SK-N-SH (cell line): ENCODE measurements at regions of chr5 and their contacts with region 1.

Region 1: GRCh38 chr5:41843456-41844370 is 26.5 kb downstream of the OXCT1 start:
- DNase-seq: peak; percentile 35
- H3K4me3 ChIP-seq: no peak overlapping the region; a peak in 1 of 4 replicates
- H3K27ac ChIP-seq: no peak overlapping the region
- H3K4me1 ChIP-seq: no peaks in the 10 kb centered on the region; a peak in 1 of 4 replicates
- H3K27me3 ChIP-seq: no peaks in the 10 kb centered on the region
- CTCF ChIP-seq: peak; percentile 93
- EP300 ChIP-seq: no peak
- RAD21 ChIP-seq: peak; percentile 100

Region 2: GRCh38 chr5:41270423-41271251 is 573.1 kb before region 1 on chr5:
- CTCF ChIA-PET with region 1: interaction called, 15 read pairs
- POLR2A ChIA-PET with region 1: no interaction called
- DNase-seq: peak; percentile 18
- H3K4me3 ChIP-seq: no peak overlapping the region; a peak in 1 of 4 replicates
- H3K27ac ChIP-seq: peak overlapping the region in 1 of 2 experiments; percentile 43; a peak in 2 of 4 replicates
- H3K4me1 ChIP-seq: peaks cover 0 to 5% of the 10 kb centered on the region in 2 experiments; a peak in 3 of 4 replicates
- H3K27me3 ChIP-seq: no peaks in the 10 kb centered on the region
- CTCF ChIP-seq: peak; percentile 91
- EP300 ChIP-seq: no peak
- RAD21 ChIP-seq: peak; percentile 94

Region 3: DNA sequence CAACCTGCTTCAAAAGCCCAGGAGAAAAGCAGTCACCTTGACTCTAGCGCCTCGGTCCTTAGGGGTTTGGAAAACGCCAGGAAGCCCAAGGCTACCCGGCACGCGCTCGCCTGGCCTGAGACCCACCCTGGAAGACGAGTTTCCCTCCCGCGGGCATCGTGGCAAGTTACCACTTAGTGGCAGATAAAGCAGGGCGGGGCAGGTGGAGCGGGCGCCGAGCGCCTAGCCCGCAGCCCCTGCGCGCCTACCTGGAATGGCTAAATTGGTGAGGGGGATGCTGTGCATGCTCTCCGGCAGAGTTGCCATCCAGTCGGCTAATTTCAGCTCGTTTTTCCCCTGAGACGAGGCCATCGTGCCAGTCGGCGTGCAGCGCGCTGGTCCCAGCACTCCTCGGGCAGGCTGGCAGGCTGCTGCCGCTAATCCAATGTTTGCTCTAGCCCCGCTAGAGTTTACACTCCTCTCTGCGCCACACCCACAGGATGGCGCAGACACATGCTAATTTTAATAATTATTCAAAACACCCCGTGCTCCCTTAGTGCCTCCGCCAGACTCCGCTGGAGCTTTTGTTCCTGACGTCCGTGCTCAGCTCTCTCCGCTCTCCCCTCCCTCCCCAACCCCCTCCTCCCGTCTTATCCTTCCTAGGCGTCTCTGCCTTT is 333.4 kb before region 1 on chr5 and contains the start of gene PLCXD3:
- CTCF ChIA-PET with region 1: interaction called, 24 read pairs
- POLR2A ChIA-PET with region 1: interaction called, 3 read pairs
- DNase-seq: peak; percentile 69
- H3K4me3 ChIP-seq: peak within 1 kb of the TSS; percentile 67 to 71
- H3K27ac ChIP-seq: peak within 1 kb of the TSS in 1 of 2 experiments; percentile 93; a peak in 2 of 4 replicates
- H3K4me1 ChIP-seq: peaks cover 10 to 15% of the 10 kb centered on the region in 2 experiments; a peak in 3 of 4 replicates
- H3K27me3 ChIP-seq: 0 out of 2 replicates have a peak, but pooled peaks cover 9% of the 10 kb centered on the region
- CTCF ChIP-seq: no peak
- EP300 ChIP-seq: no peak
- RAD21 ChIP-seq: no peak
- polyA plus RNA-seq, gene PLCXD3: 0.15 and 0.34 TPM in 2 replicates

Region 4: GRCh38 chr5:41547991-41548390 is 295.7 kb before region 1 on chr5:
- CTCF ChIA-PET with region 1: no interaction called
- POLR2A ChIA-PET with region 1: no interaction called
- DNase-seq: no peak
- H3K4me3 ChIP-seq: no peak overlapping the region
- H3K27ac ChIP-seq: no peak overlapping the region
- H3K4me1 ChIP-seq: no peaks in the 10 kb centered on the region
- H3K27me3 ChIP-seq: no peaks in the 10 kb centered on the region
- CTCF ChIP-seq: no peak
- EP300 ChIP-seq: no peak
- RAD21 ChIP-seq: no peak

Region 5: GRCh38 chr5:41641621-41642020 is 202.1 kb before region 1 on chr5:
- CTCF ChIA-PET with region 1: interaction called, 13 read pairs
- POLR2A ChIA-PET with region 1: no interaction called
- DNase-seq: no peak
- H3K4me3 ChIP-seq: no peak overlapping the region
- H3K27ac ChIP-seq: no peak overlapping the region
- H3K4me1 ChIP-seq: peaks cover 0 to 2% of the 10 kb centered on the region in 2 experiments; a peak in 1 of 4 replicates
- H3K27me3 ChIP-seq: no peaks in the 10 kb centered on the region
- CTCF ChIP-seq: peak; percentile 51
- EP300 ChIP-seq: no peak
- RAD21 ChIP-seq: peak; percentile 64

Region 6: DNA sequence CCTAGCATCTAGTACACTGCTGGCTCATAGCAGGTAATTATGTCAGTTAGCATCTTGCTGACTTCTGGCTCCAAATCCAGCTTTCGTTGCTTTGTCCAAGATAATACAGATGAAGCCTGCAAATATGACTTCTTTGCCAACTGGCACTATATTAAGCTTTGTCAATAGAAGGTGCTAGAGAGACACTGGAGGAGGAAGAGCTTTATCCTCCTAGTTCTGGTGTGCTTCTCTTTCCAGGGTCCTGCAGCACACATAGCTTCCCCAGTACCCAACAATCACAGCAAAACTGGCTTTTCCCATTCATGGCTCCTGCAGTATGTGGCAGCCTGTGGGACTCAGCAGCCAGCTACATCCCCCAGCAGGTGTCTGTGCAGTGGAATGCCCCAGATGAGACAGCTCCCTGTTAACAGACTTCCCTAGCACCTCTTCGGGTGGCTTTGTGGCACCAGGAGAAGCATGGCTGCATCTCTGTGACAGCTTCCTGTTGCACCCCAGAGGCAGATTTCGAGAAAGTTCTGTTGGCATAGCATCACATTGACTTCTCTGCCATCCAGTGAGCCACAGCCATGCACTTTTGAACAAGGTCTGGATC is 121.3 kb before region 1 on chr5:
- CTCF ChIA-PET with region 1: interaction called, 15 read pairs
- POLR2A ChIA-PET with region 1: no interaction called
- DNase-seq: no peak
- H3K4me3 ChIP-seq: no peak overlapping the region
- H3K27ac ChIP-seq: no peak overlapping the region; a peak in 1 of 4 replicates
- H3K4me1 ChIP-seq: peaks cover 0 to 8% of the 10 kb centered on the region in 2 experiments; a peak in 2 of 4 replicates
- H3K27me3 ChIP-seq: no peaks in the 10 kb centered on the region
- CTCF ChIP-seq: peak; percentile 19; the same call in 1 of the 2 replicates
- EP300 ChIP-seq: no peak
- RAD21 ChIP-seq: peak; percentile 56

Region 7: DNA sequence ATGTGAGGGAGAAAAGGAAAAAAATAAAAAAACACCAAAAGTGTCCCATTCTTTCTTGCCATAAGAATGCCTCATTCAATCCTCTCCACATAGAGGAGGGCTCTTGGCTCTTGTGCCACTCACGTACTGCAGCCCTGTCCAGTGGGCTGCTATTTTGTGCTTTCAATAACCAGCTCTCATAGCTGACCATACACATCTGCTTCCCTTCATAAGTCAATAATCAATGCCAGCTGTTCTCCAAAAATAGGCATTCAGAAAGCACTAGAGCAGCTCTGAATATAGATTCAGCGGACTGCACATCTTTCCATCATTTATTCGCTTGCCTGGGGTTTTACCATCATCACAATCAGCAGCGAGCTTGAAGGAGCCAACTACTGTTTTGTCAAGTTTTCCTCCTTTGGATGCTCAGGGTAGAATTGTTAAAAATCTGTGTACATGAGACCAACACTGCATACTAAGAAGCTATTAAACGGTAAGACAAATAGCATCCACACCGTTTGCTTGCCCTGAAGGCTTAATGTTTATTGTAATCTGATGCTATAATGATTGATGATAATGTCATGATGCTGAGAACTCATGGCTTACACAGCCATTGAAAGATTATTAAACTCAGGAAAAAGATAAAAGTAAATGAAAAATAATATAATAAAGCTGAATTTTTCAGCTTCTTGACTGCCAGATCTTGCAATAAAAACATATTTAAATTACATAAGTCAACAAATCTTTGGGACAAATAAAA is 53.5 kb before region 1 on chr5:
- CTCF ChIA-PET with region 1: interaction called, 14 read pairs
- POLR2A ChIA-PET with region 1: no interaction called
- DNase-seq: peak; percentile 55
- H3K4me3 ChIP-seq: peak overlapping the region in 1 of 2 experiments; percentile 12; a peak in 1 of 4 replicates
- H3K27ac ChIP-seq: peak overlapping the region; percentile 73 to 95; a peak in 3 of 4 replicates
- H3K4me1 ChIP-seq: peaks cover 54 to 71% of the 10 kb centered on the region in 2 experiments
- H3K27me3 ChIP-seq: no peaks in the 10 kb centered on the region
- CTCF ChIP-seq: no peak
- EP300 ChIP-seq: peak in 1 of 2 experiments; percentile 67; a peak in 2 of 4 replicates
- RAD21 ChIP-seq: peak; percentile 40

Region 8: DNA sequence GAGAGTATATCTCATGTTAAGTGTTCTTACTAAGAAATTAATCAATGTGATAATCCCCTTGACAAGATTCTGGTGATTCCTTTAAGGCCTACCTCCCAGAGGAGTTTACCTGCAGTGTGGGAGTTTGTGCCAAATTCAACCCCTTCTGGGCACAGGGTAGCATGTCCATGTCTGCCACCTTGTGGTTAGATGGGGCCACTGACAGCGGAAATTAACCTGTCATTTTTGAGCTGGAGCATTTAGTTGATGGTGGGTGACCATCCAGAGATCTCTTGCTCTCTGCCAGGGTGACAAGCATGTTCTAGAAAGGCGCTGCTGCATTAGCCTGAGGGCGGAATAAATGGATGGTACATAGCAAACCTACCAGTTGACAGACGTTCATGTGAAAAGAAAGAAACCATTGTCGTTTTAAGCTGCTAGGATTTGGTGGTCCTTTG is 213.6 kb after region 1 on chr5:
- CTCF ChIA-PET with region 1: interaction called, 12 read pairs
- POLR2A ChIA-PET with region 1: no interaction called
- DNase-seq: peak; percentile 46
- H3K4me3 ChIP-seq: peak overlapping the region in 1 of 2 experiments; percentile 10; a peak in 1 of 4 replicates
- H3K27ac ChIP-seq: no peak overlapping the region
- H3K4me1 ChIP-seq: no peaks in the 10 kb centered on the region; a peak in 1 of 4 replicates
- H3K27me3 ChIP-seq: no peaks in the 10 kb centered on the region; the same call in 1 of the 2 replicates
- CTCF ChIP-seq: peak; percentile 72
- EP300 ChIP-seq: no peak
- RAD21 ChIP-seq: peak; percentile 70